ENCODE measurements at regions of chr12 and their contacts with region 1.

Region 1: DNA sequence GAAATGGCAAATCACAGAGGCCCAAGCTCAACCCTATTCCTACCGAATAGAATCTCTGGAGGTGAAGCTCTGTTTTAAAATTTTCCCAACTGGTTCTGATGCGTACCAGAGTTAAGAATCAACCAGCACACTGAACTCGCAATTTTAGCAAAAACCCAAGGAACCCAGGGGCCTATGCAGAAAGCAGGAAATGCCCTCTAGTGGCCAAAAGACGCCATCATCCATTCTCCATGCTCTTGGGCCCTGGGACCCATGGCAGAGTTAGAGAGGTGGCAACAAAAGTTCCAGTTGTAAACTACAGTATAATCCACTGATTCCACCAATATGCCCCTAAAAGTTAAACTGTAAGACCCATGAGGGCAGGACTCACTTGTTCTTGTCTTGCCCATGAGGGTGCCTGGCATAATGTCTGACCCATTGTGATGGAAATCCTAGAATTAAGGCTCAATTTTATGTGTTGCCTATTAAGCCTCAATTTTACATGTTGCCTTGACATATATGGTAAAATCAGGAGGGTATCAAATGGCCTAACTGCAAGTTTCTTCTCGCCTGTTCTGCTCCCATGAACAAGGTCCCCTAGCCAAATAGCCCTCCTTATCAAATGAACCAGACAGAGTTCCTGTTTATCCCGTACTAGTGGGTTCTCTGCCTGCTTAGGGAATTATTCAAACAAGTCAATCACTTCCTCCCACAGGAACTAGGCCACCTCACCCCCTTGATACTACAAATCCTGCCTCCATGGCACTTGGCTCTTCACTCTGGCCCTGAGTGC is 137.5 kb upstream of the CPM start:
- DNase-seq: peak; percentile 67 to 74
- H3K4me3 ChIP-seq: no peak overlapping the region
- H3K4me3 Mint-ChIP-seq: no peak overlapping the region
- H3K27ac Mint-ChIP-seq: no peak overlapping the region
- H3K4me1 ChIP-seq: no peaks in the 10 kb centered on the region
- H3K4me1 Mint-ChIP-seq: no peaks in the 10 kb centered on the region
- H3K27me3 ChIP-seq: no peaks in the 10 kb centered on the region
- H3K27me3 Mint-ChIP-seq: no peaks in the 10 kb centered on the region
- CTCF ChIP-seq: peak; percentile 83 to 91

Region 2: GRCh38 chr12:68865399-68866164 is 204.9 kb before region 1 on chr12:
- CTCF ChIA-PET with region 1: interaction called, 3 read pairs
- POLR2A ChIA-PET with region 1: no interaction called
- intact Hi-C with region 1: loop called (anchors 1 kb)
- DNase-seq: no peak
- H3K4me3 ChIP-seq: no peak overlapping the region
- H3K4me3 Mint-ChIP-seq: no peak overlapping the region
- H3K27ac Mint-ChIP-seq: no peak overlapping the region
- H3K4me1 ChIP-seq: no peaks in the 10 kb centered on the region
- H3K4me1 Mint-ChIP-seq: no peaks in the 10 kb centered on the region
- H3K27me3 ChIP-seq: no peaks in the 10 kb centered on the region
- H3K27me3 Mint-ChIP-seq: no peaks in the 10 kb centered on the region
- CTCF ChIP-seq: no peak

Region 3: GRCh38 chr12:68871921-68872320 is 198.6 kb before region 1 on chr12:
- CTCF ChIA-PET with region 1: interaction called, 4 read pairs
- POLR2A ChIA-PET with region 1: no interaction called
- intact Hi-C with region 1: loop called (anchors 1 kb)
- DNase-seq: peak in 1 of 2 experiments; percentile 37
- H3K4me3 ChIP-seq: no peak overlapping the region
- H3K4me3 Mint-ChIP-seq: no peak overlapping the region
- H3K27ac Mint-ChIP-seq: no peak overlapping the region
- H3K4me1 ChIP-seq: no peaks in the 10 kb centered on the region
- H3K4me1 Mint-ChIP-seq: no peaks in the 10 kb centered on the region
- H3K27me3 ChIP-seq: no peaks in the 10 kb centered on the region
- H3K27me3 Mint-ChIP-seq: no peaks in the 10 kb centered on the region
- CTCF ChIP-seq: peak in 1 of 2 experiments; percentile 49

Region 4: DNA sequence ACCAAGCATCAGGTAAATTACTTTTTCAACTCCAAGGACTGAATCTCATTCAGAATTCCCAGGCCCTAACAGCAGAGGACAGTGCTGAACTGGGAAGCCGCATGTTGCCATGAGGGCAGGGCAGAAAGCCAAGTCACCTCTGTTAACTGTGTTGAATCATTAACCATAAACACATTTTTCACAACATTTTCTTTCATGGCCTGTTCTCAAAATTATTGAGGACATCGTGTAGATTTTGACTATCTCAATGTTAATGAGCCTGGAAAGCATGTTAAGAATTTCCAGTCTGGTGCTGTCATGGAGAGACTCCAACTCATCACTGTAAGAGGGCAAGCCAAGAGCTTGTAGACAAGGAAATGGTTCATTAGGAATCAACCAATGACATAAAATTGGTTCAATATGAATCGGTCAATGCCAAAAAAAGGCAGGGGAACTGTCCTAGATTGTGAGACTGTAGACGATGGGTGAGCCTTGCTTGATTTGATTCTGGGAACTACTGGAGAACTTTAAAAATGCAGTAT is 171.2 kb before region 1 on chr12:
- CTCF ChIA-PET with region 1: no interaction called
- POLR2A ChIA-PET with region 1: no interaction called
- intact Hi-C with region 1: loop called (anchors 1 kb)
- DNase-seq: peak in 1 of 2 experiments; percentile 34
- H3K4me3 ChIP-seq: no peak overlapping the region
- H3K4me3 Mint-ChIP-seq: no peak overlapping the region
- H3K27ac Mint-ChIP-seq: no peak overlapping the region
- H3K4me1 ChIP-seq: no peaks in the 10 kb centered on the region
- H3K4me1 Mint-ChIP-seq: no peaks in the 10 kb centered on the region
- H3K27me3 ChIP-seq: no peaks in the 10 kb centered on the region
- H3K27me3 Mint-ChIP-seq: no peaks in the 10 kb centered on the region
- CTCF ChIP-seq: peak in 1 of 2 experiments; percentile 78